ENCODE measurements at regions of chr16 and their contacts with region 1.

Region 1: DNA sequence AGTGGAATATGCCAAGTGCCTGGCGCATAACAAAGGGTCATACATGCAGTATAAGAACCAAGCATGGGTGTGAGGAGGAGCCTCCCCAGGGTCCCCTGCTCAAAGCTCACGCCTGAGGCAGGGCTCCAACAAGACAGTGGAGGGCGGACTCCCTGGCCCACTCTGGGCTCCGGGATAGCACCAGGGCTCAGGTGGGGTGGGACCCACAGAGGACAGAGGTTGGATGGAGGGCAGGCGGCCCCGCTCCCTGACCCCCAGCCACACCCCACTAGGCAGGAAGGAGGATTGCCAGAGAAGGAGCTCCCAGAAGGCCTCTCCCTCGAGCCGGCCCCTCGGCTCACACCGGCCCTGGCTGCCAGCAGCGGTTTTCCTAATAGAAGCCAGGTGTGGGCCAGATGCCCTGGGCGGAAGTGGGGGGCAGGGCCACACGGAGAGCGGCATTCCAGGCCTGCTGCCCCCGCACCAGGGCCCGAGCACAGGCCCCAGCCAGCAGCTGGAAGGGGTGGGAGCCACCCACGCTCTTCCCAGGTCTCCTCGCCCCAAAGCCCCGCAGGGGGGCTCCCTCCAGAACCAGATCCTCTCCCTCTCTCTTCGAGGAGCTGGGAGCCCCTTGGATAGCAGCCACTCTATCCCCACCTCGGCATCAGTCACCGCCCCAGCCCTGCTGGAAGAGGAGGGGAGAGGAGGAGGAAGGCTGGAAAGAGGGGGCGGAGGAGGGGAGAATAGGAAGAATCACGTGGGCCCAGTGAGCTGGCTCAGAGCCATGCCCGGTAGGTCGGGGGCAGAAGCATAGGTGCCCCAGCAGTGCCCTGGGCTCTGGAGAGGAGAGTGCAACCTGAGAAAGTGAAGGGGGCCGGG is 21.0 kb downstream of the VASN start:
- DNase-seq: peak; percentile 79
- H3K4me3 ChIP-seq: no peak overlapping the region
- H3K27ac ChIP-seq: peak overlapping the region; percentile 87
- H3K27me3 ChIP-seq: no peaks in the 10 kb centered on the region
- CTCF ChIP-seq: no peak

Region 2: GRCh38 chr16:4358831-4359561 is 33.6 kb before region 1 on chr16:
- CTCF ChIA-PET with region 1: interaction called, 10 read pairs
- POLR2A ChIA-PET with region 1: no interaction called
- DNase-seq: no peak
- H3K4me3 ChIP-seq: no peak overlapping the region
- H3K27ac ChIP-seq: no peak overlapping the region
- H3K27me3 ChIP-seq: no peaks in the 10 kb centered on the region
- CTCF ChIP-seq: peak; percentile 86